ENCODE measurements at regions of chr9 and their contacts with region 1.

Region 1: GRCh38 chr9:100598641-100599145 is 20.8 kb downstream of the CAVIN4 start:
- DNase-seq: peak; percentile 63 to 90 (median 75)
- ATAC-seq: peak; percentile 85 to 92 (median 91)
- H3K4me3 ChIP-seq: peak overlapping the region; percentile 58 to 79
- H3K4me3 Mint-ChIP-seq: peak overlapping the region; percentile 68 to 80 (median 78)
- H3K27ac ChIP-seq: peak overlapping the region; percentile 72
- H3K27ac Mint-ChIP-seq: peak overlapping the region; percentile 9 to 73
- H3K4me1 ChIP-seq: peaks cover 6 to 16% of the 10 kb centered on the region in 2 experiments
- H3K4me1 Mint-ChIP-seq: peaks cover 18 to 28% (median 28%) of the 10 kb centered on the region in 3 donors
- H3K27me3 ChIP-seq: no peaks in the 10 kb centered on the region
- H3K27me3 Mint-ChIP-seq: no peaks in the 10 kb centered on the region

Region 2: DNA sequence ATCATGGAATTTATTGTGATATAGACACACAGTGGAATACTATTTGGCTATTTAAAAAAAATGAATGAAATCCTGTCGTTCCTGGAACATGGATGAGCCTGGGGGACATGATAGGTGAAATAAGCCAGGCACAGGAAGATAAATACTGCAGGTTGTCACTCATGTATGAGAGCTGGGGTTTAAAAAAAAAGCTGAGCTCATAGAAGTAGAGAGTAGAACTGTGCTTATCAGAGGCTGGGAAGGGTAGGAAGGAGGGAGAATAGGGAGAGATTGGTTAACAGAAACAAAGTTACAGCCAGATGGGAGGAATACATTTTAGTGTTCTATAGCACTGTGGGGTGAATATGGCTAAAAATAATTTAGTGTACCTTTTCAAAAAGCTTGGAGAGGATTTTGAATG is 977.7 kb before region 1 on chr9:
- CTCF ChIA-PET with region 1: no interaction called
- POLR2A ChIA-PET with region 1: no interaction called
- DNase-seq: no peak
- ATAC-seq: no peak
- H3K4me3 ChIP-seq: no peak overlapping the region
- H3K4me3 Mint-ChIP-seq: no peak overlapping the region
- H3K27ac ChIP-seq: no peak overlapping the region
- H3K27ac Mint-ChIP-seq: no peak overlapping the region
- H3K4me1 ChIP-seq: no peaks in the 10 kb centered on the region
- H3K4me1 Mint-ChIP-seq: no peaks in the 10 kb centered on the region
- H3K27me3 ChIP-seq: peaks cover 0 to 3% of the 10 kb centered on the region in 2 experiments
- H3K27me3 Mint-ChIP-seq: peaks cover 3 to 4% of the 10 kb centered on the region in 2 donors

Region 3: GRCh38 chr9:100084734-100085133 is 514.0 kb before region 1 on chr9:
- CTCF ChIA-PET with region 1: no interaction called
- POLR2A ChIA-PET with region 1: interaction called in 1 of 2 experiments, 12 read pairs
- DNase-seq: peak in 1 of 35 experiments; percentile 48
- ATAC-seq: peak; percentile 38 to 83 (median 56)
- H3K4me3 ChIP-seq: no peak overlapping the region
- H3K4me3 Mint-ChIP-seq: no peak overlapping the region
- H3K27ac ChIP-seq: no peak overlapping the region
- H3K27ac Mint-ChIP-seq: no peak overlapping the region
- H3K4me1 ChIP-seq: peaks cover 2 to 23% of the 10 kb centered on the region in 2 experiments
- H3K4me1 Mint-ChIP-seq: peaks cover 83 to 86% (median 83%) of the 10 kb centered on the region in 3 donors
- H3K27me3 ChIP-seq: no peaks in the 10 kb centered on the region
- H3K27me3 Mint-ChIP-seq: no peaks in the 10 kb centered on the region

Region 4: GRCh38 chr9:101311758-101312420 is 713.2 kb after region 1 on chr9:
- CTCF ChIA-PET with region 1: interaction called, 6 to 19 read pairs
- POLR2A ChIA-PET with region 1: no interaction called
- DNase-seq: peak in 3 of 35 experiments; percentile 2 to 77 (median 24)
- ATAC-seq: peak in 1 of 4 experiments; percentile 55
- H3K4me3 ChIP-seq: no peak overlapping the region
- H3K4me3 Mint-ChIP-seq: no peak overlapping the region
- H3K27ac ChIP-seq: no peak overlapping the region
- H3K27ac Mint-ChIP-seq: no peak overlapping the region
- H3K4me1 ChIP-seq: no peaks in the 10 kb centered on the region
- H3K4me1 Mint-ChIP-seq: no peaks in the 10 kb centered on the region
- H3K27me3 ChIP-seq: peaks cover 0 to 2% of the 10 kb centered on the region in 2 experiments
- H3K27me3 Mint-ChIP-seq: peaks cover 0 to 22% of the 10 kb centered on the region in 2 donors

Measured in T-cell (primary cell).